ENCODE measurements at regions of chr18 and their contacts with region 1.

Region 1: DNA sequence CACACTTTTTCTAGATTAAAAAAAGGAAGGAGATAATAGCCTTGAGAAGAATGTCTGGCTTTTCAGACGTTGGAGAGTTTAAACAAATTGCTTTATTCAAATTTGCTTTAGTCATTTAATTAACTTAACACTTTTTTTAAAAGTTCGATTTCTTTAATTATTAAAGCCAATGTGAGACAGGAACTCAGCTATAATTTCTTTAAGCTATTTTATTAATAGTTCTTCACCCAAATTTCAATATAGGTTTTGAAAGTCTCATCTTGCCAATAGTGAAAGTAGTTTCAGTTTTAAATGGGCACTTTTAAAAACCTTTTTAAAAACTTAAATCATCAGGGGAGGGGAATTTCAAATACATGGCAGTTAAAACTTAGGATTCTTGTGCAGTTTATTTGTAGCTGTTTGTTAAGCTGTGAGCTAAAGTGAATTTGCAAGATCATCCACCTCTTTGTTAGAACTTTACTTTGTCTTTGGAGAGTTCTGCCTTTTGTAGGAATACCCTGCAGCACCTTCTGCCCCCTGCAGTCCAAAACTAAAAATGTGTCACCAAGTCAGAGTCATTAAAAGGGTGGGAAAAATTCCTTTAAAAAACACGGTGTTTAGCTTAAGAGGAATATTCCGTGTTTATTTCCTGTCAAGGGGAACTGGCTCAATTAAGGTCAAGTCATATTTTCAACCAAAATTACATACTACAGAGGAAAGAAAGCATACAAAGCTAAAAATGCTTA is 4.6 kb downstream of the TGIF1 start:
- DNase-seq: peak; percentile 62
- H3K4me3 Mint-ChIP-seq: peak overlapping the region; percentile 95
- H3K27ac Mint-ChIP-seq: peak overlapping the region; percentile 99
- H3K4me1 Mint-ChIP-seq: peaks cover 37% of the 10 kb centered on the region
- H3K27me3 Mint-ChIP-seq: no peaks in the 10 kb centered on the region
- CTCF ChIP-seq: peak; percentile 48

Region 2: GRCh38 chr18:3297025-3297984 is 157.2 kb before region 1 on chr18:
- CTCF ChIA-PET with region 1: interaction called, 21 read pairs
- POLR2A ChIA-PET with region 1: interaction called, 120 read pairs
- intact Hi-C with region 1: no loop called
- DNase-seq: peak; percentile 97
- H3K4me3 Mint-ChIP-seq: peak overlapping the region; percentile 95
- H3K27ac Mint-ChIP-seq: peak overlapping the region; percentile 47
- H3K4me1 Mint-ChIP-seq: peaks cover 5% of the 10 kb centered on the region
- H3K27me3 Mint-ChIP-seq: no peaks in the 10 kb centered on the region
- CTCF ChIP-seq: peak; percentile 36

Region 3: DNA sequence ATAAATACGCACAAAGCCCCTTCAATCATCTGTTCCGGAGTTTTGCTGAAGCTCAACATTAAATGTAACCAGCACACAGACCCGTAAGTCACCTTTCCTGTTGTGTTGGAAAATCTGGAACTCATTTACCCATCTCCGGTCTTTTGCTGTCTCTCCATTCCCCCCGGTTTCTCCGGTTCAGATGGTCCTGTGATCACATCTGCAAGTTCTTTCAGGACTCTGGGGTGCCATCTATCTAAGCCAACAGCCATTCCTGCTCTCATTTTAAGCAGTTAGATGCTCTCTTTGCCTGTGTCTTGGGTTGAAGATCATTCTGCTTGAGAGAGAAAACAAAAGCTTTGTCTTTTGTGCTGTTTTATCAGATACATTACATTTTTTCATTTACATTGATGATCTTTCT is 96.2 kb before region 1 on chr18:
- CTCF ChIA-PET with region 1: no interaction called
- POLR2A ChIA-PET with region 1: no interaction called
- intact Hi-C with region 1: no loop called
- DNase-seq: no peak
- H3K4me3 Mint-ChIP-seq: no peak overlapping the region
- H3K27ac Mint-ChIP-seq: no peak overlapping the region
- H3K4me1 Mint-ChIP-seq: peaks cover 4% of the 10 kb centered on the region
- H3K27me3 Mint-ChIP-seq: no peaks in the 10 kb centered on the region
- CTCF ChIP-seq: no peak

Region 4: GRCh38 chr18:3380384-3380961 is 74.1 kb before region 1 on chr18:
- CTCF ChIA-PET with region 1: no interaction called
- POLR2A ChIA-PET with region 1: interaction called, 4 read pairs
- intact Hi-C with region 1: loop called (anchors 1 kb)
- DNase-seq: peak; percentile 74
- H3K4me3 Mint-ChIP-seq: no peak overlapping the region
- H3K27ac Mint-ChIP-seq: no peak overlapping the region
- H3K4me1 Mint-ChIP-seq: no peaks in the 10 kb centered on the region
- H3K27me3 Mint-ChIP-seq: no peaks in the 10 kb centered on the region
- CTCF ChIP-seq: peak; percentile 19

Region 5: DNA sequence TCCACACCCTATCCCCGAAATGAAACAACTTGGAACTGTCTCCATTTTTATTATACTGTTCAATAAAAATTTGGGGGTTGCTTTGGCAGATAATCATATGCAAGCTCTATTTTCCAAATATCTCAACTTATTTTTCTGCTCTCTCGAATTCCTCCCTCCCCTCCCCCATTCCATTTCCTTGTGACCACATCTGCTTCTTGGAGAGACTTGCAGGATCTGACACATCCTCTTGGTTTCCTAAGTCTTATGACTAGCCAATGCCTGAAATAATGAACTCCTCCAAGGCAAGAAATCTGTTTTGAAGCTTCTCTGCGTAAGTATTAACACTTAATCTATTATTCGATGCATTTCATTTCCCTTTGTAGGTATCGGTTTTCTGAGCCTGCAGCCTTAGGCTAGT is 11.5 kb after region 1 on chr18:
- CTCF ChIA-PET with region 1: interaction called, 14 read pairs
- POLR2A ChIA-PET with region 1: interaction called, 95 read pairs
- intact Hi-C with region 1: no loop called
- DNase-seq: peak; percentile 77
- H3K4me3 Mint-ChIP-seq: no peak overlapping the region
- H3K27ac Mint-ChIP-seq: no peak overlapping the region
- H3K4me1 Mint-ChIP-seq: peaks cover 13% of the 10 kb centered on the region
- H3K27me3 Mint-ChIP-seq: no peaks in the 10 kb centered on the region
- CTCF ChIP-seq: no peak

Region 6: DNA sequence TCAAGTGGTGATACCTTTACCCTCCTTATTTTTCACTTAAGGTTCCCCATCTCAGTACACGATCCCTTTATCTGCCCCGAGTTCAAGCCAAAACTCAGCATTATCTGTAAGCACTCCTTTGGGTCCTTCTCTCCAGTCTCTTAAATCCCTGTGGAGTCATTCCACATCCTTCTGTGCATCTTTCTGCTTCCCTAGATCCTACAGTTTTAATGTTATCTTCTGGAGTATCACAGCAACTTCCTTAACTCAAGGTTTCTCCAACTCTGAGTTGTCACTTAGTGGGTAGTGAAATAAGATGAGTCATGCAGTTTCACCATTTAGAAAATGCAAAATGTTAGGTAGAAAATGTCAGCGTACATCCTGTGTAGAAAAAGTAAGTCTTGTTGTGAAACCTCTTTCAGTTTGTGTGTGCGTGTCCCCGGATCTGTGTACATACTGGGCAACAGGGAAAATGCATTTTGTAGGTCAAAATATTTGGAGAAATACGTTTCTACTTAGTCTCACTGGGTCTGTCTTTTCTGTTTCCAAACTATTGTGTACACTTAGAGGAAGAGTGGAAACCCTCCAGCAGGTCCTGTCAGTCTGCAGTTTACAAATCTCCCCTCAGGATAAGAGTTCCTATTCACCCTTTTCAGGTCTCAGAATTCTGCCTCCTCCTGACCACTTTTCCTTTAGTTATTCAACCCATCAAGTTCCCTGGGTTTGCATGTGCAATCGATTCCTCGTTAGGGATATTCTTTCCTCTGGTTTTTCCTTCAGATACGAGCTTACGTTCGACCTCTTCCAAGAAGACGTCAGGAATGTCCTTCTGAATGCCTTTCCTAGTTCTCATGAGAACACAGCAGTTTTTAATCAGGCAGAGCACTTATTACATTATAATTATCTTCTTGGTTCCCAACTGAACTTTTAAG is 150.2 kb after region 1 on chr18:
- CTCF ChIA-PET with region 1: interaction called, 9 read pairs
- POLR2A ChIA-PET with region 1: interaction called, 242 read pairs
- intact Hi-C with region 1: no loop called
- DNase-seq: peak; percentile 91
- H3K4me3 Mint-ChIP-seq: no peak overlapping the region
- H3K27ac Mint-ChIP-seq: no peak overlapping the region
- H3K4me1 Mint-ChIP-seq: no peaks in the 10 kb centered on the region
- H3K27me3 Mint-ChIP-seq: no peaks in the 10 kb centered on the region
- CTCF ChIP-seq: no peak